PC-3 (cell line): ENCODE measurements at regions of chr7 and their contacts with region 1.

Region 1: GRCh38 chr7:45917658-45918057 is 3.4 kb downstream of the IGFBP3 start:
- DNase-seq: peak; percentile 81
- ATAC-seq: peak; percentile 22
- H3K4me3 ChIP-seq: peak overlapping the region; percentile 80
- H3K27ac ChIP-seq: no peak overlapping the region
- H3K4me1 ChIP-seq: peaks cover 33% of the 10 kb centered on the region
- H3K27me3 ChIP-seq: no peaks in the 10 kb centered on the region
- CTCF ChIP-seq: peak; percentile 92

Region 2: GRCh38 chr7:45890902-45891461 is 26.7 kb before region 1 on chr7:
- CTCF ChIA-PET with region 1: interaction called, 4 read pairs
- POLR2A ChIA-PET with region 1: no interaction called
- intact Hi-C with region 1: loop called (anchors 2 kb)
- DNase-seq: peak; percentile 78
- ATAC-seq: no peak
- H3K4me3 ChIP-seq: no peak overlapping the region
- H3K27ac ChIP-seq: no peak overlapping the region
- H3K4me1 ChIP-seq: peaks cover 26% of the 10 kb centered on the region
- H3K27me3 ChIP-seq: no peaks in the 10 kb centered on the region
- CTCF ChIP-seq: peak; percentile 82

Region 3: GRCh38 chr7:46352004-46352954 is 434.6 kb after region 1 on chr7:
- CTCF ChIA-PET with region 1: interaction called, 3 read pairs
- POLR2A ChIA-PET with region 1: no interaction called
- intact Hi-C with region 1: loop called (anchors 1 kb)
- DNase-seq: peak; percentile 79
- ATAC-seq: peak; percentile 85
- H3K4me3 ChIP-seq: no peak overlapping the region
- H3K27ac ChIP-seq: no peak overlapping the region
- H3K4me1 ChIP-seq: no peaks in the 10 kb centered on the region
- H3K27me3 ChIP-seq: no peaks in the 10 kb centered on the region
- CTCF ChIP-seq: peak; percentile 91

Region 4: GRCh38 chr7:47100817-47101435 is 1183.3 kb after region 1 on chr7:
- CTCF ChIA-PET with region 1: interaction called, 4 read pairs
- POLR2A ChIA-PET with region 1: no interaction called
- intact Hi-C with region 1: loop called (anchors 5 kb)
- DNase-seq: peak; percentile 89
- ATAC-seq: peak; percentile 97
- H3K4me3 ChIP-seq: peak overlapping the region; percentile 67
- H3K27ac ChIP-seq: no peak overlapping the region
- H3K4me1 ChIP-seq: no peaks in the 10 kb centered on the region
- H3K27me3 ChIP-seq: no peaks in the 10 kb centered on the region
- CTCF ChIP-seq: peak; percentile 90

Region 5: DNA sequence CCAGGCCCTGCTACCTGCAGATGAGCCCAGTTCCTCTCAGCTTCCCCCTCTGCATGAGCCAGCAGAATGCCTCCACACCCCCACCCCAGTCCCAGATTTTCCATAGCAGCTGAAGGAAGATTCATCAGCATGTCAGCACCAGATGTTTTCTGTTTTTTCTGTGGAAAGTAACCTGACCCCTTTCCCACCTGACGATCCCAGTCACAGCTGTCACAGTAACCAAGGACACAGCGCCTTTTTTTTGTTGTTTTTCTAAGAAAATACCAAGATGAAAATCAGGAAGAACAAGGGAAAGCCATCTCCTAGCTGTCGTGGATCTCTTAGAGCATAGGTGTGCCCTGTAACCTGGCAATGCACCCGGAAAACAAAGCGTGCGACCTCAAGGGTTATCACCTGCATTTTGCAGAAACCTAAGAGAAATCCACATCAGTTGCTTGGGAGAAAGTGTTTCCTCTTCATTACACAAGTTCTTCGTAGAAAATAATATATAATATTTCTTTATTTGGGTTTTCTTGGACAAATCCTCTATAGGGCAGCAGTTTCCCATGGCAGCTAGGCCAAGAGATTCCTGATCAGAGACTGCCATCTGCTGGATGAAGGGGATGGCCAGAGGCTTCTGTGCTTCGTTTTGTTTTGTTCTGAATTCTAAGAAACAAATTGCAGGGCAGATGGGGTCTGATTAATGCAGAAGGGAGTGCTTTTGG is 1262.3 kb after region 1 on chr7:
- CTCF ChIA-PET with region 1: no interaction called
- POLR2A ChIA-PET with region 1: no interaction called
- intact Hi-C with region 1: loop called (anchors 1 kb)
- DNase-seq: peak; percentile 73
- ATAC-seq: peak; percentile 97
- H3K4me3 ChIP-seq: no peak overlapping the region
- H3K27ac ChIP-seq: no peak overlapping the region
- H3K4me1 ChIP-seq: no peaks in the 10 kb centered on the region
- H3K27me3 ChIP-seq: 0 out of 2 replicates have a peak, but pooled peaks cover 5% of the 10 kb centered on the region
- CTCF ChIP-seq: peak; percentile 85